Head of caudate nucleus (tissue), 42 donors: ENCODE measurements at regions of chr3 and their contacts with region 1.

Region 1: DNA sequence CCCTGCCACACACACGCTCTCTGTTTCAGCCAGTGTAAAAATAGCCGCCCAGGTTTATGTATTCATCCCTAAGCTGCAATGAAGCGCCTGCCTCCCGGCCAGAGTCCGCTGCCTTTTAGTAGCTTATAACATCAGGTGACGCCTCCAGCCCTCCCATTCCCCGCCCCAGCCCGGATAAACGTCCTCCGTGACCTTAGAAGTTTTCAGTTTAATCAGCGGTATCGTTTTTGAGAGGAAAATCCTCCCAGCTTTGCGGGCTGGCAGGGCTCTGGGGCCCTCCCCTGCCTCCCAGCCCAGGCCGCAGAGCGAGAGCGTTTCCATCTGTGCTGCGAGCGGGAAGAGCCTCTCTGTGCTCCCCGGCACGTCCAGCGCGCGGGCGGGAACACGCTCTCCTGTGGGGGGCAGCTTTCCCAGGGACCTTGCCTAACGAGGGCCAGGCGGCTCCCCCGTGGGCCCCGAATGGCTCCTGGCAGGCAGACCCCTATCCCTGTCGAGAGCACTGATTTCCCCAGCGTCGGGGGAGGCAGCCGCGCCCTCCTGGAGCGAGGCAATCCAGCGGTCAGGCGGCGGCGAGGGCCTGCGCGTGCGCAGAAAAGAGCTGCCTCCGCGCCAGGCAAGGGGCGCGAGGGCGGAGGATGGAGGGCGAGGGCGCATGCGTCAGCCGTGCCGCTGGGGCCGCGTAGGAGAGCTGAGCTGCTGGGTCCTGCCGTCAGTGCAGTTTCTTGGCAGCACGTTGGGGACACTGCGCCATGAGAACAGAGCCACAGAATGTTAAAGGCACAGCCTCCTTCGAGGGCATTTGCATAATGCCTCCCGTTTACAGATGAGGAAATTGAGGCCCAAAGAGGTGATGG is 71.1 kb downstream of the CCNL1 start:
- DNase-seq: peak; percentile 90 to 98 (median 96)

Region 2: DNA sequence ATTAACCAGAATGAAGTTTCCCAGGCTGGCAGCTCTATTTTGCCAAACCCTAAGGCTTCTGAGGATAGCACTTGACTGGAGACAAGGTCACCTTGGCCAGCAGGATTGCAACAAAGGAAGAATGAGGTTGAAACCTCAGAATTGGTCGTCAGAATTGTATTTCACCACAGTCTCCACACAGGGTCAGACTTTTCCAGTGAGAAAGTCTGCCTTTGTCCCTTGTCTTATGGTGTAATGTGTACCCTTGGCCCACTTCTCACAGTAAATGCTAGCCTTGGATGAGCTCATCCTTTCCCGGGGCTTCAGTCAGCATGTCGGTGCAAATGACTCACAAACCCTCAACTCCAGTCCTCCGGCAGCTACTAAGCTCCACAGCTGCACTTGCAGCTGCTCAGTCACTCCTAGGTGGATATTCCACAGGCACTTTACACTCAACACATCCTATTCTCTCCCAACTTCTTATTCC is 553.6 kb before region 1 on chr3:
- intact Hi-C with region 1: loop called (anchors 5 kb)
- DNase-seq: peak in 38 of 42 donors; percentile 24 to 90 (median 60)

Region 3: GRCh38 chr3:157130467-157131251 is 41.8 kb after region 1 on chr3:
- intact Hi-C with region 1: loop called (anchors 2 kb)
- DNase-seq: peak in 35 of 42 donors; percentile 15 to 85 (median 55)